ENCODE measurements at regions of chr12 and their contacts with region 1.

Region 1: DNA sequence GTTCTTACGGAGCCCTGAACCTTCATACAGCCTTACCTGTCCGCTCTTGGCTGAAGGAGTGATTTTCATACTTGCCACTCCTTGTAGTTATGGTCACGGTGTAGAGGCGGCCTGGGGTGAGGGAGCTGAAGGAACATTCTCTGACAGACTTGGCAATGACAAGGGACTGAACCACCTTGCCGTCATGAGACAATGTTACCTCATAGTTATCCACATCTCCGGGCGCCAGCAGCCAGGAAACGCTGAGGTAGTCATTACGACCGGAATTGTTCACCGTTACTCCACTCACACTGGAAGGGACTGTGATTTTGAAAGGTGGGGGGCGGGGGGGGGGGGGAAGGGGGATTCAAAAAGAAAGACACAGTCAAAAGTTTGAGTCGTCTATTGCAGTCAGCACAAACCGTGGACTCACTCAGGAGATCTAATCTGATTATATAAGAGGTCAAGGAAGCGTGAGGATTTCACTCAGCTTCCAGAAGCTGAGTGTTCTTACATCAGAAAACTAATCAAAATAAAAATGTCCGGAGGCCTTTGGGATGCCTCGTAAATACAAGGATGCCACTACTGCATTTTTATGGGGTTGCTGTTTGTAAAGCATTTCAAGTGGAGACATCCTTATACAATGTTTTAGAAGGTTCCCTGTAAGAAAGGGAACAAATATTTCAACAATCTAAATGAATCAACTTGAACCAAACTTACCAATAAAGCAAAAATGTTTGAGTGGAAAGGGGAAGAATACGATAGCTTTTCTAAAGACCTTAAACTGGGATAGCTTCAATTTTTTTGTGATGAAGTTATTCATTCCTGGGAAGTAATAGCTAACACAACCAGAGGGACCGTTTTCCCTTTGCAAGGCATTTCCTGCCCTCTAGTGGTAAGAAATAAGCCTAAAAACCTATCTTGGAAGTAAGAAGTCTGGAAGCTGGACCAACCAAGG is 60.6 kb downstream of the PTPRB start:
- DNase-seq: no peak
- ATAC-seq: peak; percentile 70 to 75
- H3K4me3 ChIP-seq: no peak overlapping the region
- H3K27ac ChIP-seq: peak overlapping the region; percentile 37
- H3K4me1 ChIP-seq: no peaks in the 10 kb centered on the region
- H3K27me3 ChIP-seq: no peaks in the 10 kb centered on the region

Region 2: GRCh38 chr12:69879041-69879960 is 697.3 kb before region 1 on chr12:
- intact Hi-C with region 1: loop called (anchors 5 to 10 kb)
- DNase-seq: peak; percentile 67 to 87 (median 76)
- ATAC-seq: peak; percentile 92 to 95
- H3K4me3 ChIP-seq: peak overlapping the region; percentile 46
- H3K27ac ChIP-seq: no peak overlapping the region
- H3K4me1 ChIP-seq: peaks cover 1% of the 10 kb centered on the region
- H3K27me3 ChIP-seq: no peaks in the 10 kb centered on the region

Region 3: DNA sequence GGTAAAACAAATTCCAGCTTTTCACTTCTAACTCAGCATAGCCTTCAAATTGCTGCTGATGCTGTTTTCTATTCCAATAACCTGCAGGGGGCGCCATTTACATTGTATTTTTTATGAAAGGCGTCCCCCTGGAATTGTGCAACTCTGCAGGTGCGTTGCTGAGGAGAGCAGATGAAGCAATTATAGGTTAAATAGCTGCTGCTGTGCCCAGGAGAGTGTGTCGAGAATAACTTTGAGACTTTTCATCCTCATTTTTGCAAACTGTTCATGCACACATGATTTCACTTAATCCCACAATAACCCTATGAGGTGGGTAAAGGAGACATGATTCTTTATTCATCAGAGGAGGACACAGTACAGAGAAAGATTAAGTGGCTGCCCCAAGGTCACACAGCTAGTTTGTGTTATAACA is 675.9 kb before region 1 on chr12:
- intact Hi-C with region 1: loop called in 2 of 4 experiments (anchors 2 to 5 kb)
- DNase-seq: peak; percentile 55 to 75 (median 68)
- ATAC-seq: peak; percentile 15 to 75
- H3K4me3 ChIP-seq: no peak overlapping the region
- H3K27ac ChIP-seq: no peak overlapping the region
- H3K4me1 ChIP-seq: no peaks in the 10 kb centered on the region
- H3K27me3 ChIP-seq: no peaks in the 10 kb centered on the region

Region 4: GRCh38 chr12:70365648-70366518 is 210.7 kb before region 1 on chr12 and contains the start of gene KCNMB4:
- intact Hi-C with region 1: loop called in 1 of 4 experiments (anchors 10 kb)
- DNase-seq: peak; percentile 72 to 90 (median 87)
- ATAC-seq: peak; percentile 95 to 97
- H3K4me3 ChIP-seq: peak within 1 kb of the TSS; percentile 99
- H3K27ac ChIP-seq: peak within 1 kb of the TSS; percentile 10
- H3K4me1 ChIP-seq: peaks cover 2% of the 10 kb centered on the region
- H3K27me3 ChIP-seq: no peaks in the 10 kb centered on the region
- total RNA-seq, gene KCNMB4: 2.4 to 4.5 (median 3.2) TPM

Region 5: DNA sequence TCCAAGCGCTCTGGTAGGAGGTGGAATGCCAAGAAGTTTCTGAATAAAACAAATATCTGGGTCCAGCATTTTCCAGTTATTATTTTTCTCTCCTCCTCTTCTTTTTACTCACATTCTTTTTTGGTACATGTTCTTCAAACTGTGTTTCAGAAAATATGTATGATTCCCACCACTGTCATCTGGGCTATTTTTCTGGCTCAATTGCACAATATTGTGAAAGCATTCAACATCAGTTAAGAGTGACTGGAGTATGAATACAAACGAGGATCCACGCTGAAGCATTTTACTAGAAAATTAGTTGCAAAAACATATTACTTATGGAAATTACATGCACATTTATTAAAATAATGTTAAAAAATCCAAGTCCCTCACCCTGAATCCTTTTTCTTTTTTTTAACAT is 149.0 kb before region 1 on chr12:
- intact Hi-C with region 1: no loop called
- DNase-seq: no peak
- ATAC-seq: no peak
- H3K4me3 ChIP-seq: no peak overlapping the region
- H3K27ac ChIP-seq: no peak overlapping the region
- H3K4me1 ChIP-seq: no peaks in the 10 kb centered on the region
- H3K27me3 ChIP-seq: no peaks in the 10 kb centered on the region

Region 6: GRCh38 chr12:70497508-70497907 is 79.1 kb before region 1 on chr12:
- intact Hi-C with region 1: no loop called
- DNase-seq: no peak
- ATAC-seq: no peak
- H3K4me3 ChIP-seq: no peak overlapping the region
- H3K27ac ChIP-seq: no peak overlapping the region
- H3K4me1 ChIP-seq: no peaks in the 10 kb centered on the region
- H3K27me3 ChIP-seq: no peaks in the 10 kb centered on the region

Region 7: DNA sequence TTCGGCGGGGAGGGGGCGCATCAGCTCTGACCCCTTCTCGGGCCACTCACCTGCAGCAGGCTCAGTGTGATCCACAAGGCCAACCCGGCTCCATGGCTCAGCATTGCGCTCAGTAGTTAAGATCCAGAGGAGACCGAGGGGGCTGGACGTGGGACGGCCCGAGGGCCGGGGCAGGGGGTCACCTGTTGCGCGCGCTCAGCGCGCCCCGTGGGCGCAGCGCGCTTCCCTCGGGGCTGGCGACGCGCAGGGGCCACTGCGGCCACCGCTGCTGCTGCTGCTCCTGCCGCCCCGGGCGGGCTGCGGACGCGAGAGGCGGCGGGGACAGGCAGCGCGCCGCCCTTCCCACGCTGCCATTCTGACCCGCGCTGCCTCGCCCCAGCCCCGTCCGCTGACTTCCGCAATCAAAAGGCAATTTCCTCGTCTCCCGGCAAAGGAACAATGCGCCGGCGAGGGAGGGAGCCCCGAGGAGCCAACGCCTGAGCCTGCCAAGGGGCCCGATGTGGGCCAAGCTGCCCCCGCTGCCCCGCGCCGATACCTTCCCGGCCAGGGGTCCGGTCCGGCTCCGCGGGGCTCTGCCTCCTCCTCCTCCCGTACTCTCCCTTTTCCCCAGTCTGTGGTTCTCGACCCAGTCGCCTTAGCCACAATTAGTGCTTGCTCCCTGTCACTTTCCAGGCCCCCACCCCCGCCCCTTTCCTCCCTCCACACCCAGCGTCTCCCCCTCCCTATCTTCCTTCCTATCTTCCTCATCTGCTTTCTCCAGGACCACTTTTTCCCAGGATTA is 33.3 kb after region 1 on chr12:
- intact Hi-C with region 1: no loop called
- DNase-seq: peak; percentile 70 to 87 (median 84)
- ATAC-seq: peak; percentile 92 to 93
- H3K4me3 ChIP-seq: peak overlapping the region; percentile 70
- H3K27ac ChIP-seq: peak overlapping the region; percentile 89
- H3K4me1 ChIP-seq: no peaks in the 10 kb centered on the region
- H3K27me3 ChIP-seq: no peaks in the 10 kb centered on the region